Heart right ventricle (tissue), 16 donors: ENCODE measurements at regions of chr5 and their contacts with region 1.

Region 1: DNA sequence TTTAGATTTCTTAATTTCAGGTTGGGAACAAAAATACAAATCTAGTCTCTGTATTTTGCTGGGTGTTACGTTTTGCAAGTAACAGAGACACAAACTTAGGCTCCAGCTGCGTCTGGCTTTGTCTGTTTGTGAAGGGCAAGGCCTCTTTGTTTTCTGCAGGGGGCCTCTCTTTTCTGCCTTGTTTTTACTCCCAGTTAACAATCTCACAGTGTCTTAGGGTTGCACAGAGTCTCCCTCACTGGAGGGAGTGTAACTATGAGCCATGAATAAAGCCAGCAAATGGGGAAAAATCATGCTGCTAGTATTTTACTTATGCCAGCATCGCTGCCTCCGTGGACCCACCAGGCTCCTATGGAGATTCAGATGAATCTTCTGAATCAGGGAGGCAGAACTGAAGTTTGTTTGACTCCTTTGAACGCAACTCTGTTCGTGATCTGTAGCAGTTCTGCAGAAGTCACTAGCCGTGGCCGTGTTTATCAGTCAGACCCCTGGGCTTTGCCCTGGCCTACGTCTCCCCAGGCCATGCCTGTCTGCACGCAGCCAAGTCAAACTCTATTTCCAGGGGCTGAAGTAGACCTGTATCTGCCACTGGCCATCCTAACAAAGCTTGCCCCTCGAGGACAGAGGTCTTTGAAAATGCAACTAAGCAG is 77.2 kb downstream of the ATP10B start:
- DNase-seq: no peak
- ATAC-seq: no peak
- H3K4me3 ChIP-seq: no peak overlapping the region
- H3K27ac ChIP-seq: no peak overlapping the region
- H3K4me1 ChIP-seq: no peaks in the 10 kb centered on the region
- H3K27me3 ChIP-seq: peaks cover 0 to 5% (median 0%) of the 10 kb centered on the region in 7 donors
- CTCF ChIP-seq: no peak

Region 2: GRCh38 chr5:162512935-162513575 is 1738.3 kb after region 1 on chr5:
- intact Hi-C with region 1: loop called in 1 of 10 experiments (anchors 5 kb)
- DNase-seq: no peak
- ATAC-seq: no peak
- H3K4me3 ChIP-seq: no peak overlapping the region
- H3K27ac ChIP-seq: no peak overlapping the region
- H3K4me1 ChIP-seq: no peaks in the 10 kb centered on the region
- H3K27me3 ChIP-seq: no peaks in the 10 kb centered on the region
- CTCF ChIP-seq: no peak